CD8-positive, alpha-beta T cell (primary cell): ENCODE measurements at regions of chr22 and their contacts with region 1.

Region 1: GRCh38 chr22:26483439-26484359 is at the starts of genes HPS4 and SRRD:
- DNase-seq: peak; percentile 87 to 97 (median 93)
- ATAC-seq: peak; percentile 83
- H3K4me3 ChIP-seq: peak within 1 kb of the TSS; percentile 78 to 97
- H3K4me3 Mint-ChIP-seq: peak within 1 kb of the TSS; percentile 95
- H3K27ac ChIP-seq: peak within 1 kb of the TSS; percentile 85 to 94
- H3K27ac Mint-ChIP-seq: peak within 1 kb of the TSS; percentile 99
- H3K4me1 ChIP-seq: peaks cover 53% of the 10 kb centered on the region
- H3K4me1 Mint-ChIP-seq: peaks cover 69% of the 10 kb centered on the region
- H3K27me3 ChIP-seq: no peaks in the 10 kb centered on the region
- H3K27me3 Mint-ChIP-seq: no peaks in the 10 kb centered on the region
- CTCF ChIP-seq: no peak
- total RNA-seq, gene HPS4: 67.0 to 71.0 TPM
- total RNA-seq, gene SRRD: 22.1 to 24.1 TPM

Region 2: DNA sequence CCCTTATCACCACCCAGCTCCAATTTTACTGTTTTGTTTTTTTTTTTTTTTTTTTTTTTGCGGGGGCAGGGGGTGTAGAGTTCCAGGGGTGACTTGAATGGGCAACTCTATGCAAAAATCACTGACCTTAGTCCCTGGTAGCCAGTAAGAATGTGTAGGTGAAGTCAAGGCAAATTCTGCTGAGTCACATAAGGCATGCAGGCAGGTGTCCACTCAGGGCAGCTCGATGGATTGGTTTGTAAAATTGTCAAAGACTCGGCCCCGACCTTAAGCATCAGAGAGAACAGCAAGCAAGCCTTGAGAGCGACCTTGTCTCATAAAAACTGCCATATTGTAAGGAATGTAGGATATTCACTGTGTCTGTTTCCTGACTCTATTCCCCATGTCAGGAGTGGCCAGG is 465.8 kb before region 1 on chr22:
- CTCF ChIA-PET with region 1: no interaction called
- POLR2A ChIA-PET with region 1: no interaction called
- intact Hi-C with region 1: no loop called
- DNase-seq: no peak
- ATAC-seq: no peak
- H3K4me3 ChIP-seq: no peak overlapping the region
- H3K4me3 Mint-ChIP-seq: no peak overlapping the region
- H3K27ac ChIP-seq: no peak overlapping the region
- H3K27ac Mint-ChIP-seq: no peak overlapping the region
- H3K4me1 ChIP-seq: no peaks in the 10 kb centered on the region
- H3K4me1 Mint-ChIP-seq: no peaks in the 10 kb centered on the region
- H3K27me3 ChIP-seq: no peaks in the 10 kb centered on the region
- H3K27me3 Mint-ChIP-seq: peaks cover 16% of the 10 kb centered on the region
- CTCF ChIP-seq: no peak

Region 3: DNA sequence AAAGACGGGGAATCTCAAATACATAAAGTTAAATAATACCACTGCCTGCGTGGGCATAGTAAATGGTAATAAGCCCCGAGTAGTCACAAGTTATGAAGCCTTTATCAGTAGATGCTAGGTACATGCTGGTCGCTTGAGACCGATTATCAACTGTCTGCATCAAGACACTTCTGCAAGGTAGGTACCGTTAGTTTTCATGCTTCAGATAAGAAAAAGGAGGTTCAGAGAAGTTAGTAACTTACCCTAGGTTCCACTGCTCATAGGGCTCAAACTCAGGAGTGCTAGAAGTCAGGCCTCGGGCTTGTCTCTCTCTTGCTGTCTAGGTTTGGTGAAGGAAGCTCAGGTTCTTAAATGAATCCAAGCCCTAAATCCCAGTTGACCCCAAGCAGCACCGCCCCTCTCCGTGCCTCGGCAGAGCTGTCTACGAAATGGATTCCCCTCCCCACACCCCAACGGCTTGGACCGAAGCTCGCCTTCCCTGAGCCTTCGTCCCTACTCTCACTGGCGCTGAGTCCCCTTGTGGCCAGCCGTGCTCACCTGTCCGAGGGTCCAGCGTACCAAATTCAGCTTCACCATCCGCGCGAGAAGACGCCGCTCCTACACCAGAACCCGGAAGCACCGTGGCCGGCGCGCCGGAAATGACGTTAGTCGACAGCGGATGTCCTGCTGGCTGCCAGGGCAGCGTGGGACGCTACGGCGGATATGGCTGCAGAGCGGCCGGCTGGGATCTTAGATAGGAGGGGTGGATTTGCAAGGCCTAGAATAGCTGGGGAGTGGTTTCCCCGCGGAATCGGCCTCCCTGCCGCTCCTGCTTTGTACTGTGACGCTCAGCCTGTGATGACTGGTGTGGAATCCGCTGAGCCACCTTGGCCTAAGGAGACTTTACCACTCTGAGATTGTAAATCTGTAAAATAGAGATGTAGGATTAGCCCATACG is 28.4 kb after region 1 on chr22 and contains the start of gene TFIP11:
- CTCF ChIA-PET with region 1: interaction called, 3 read pairs
- POLR2A ChIA-PET with region 1: interaction called, 17 read pairs
- intact Hi-C with region 1: loop called (anchors 1 kb)
- DNase-seq: peak; percentile 76 to 94 (median 92)
- ATAC-seq: peak; percentile 86
- H3K4me3 ChIP-seq: peak within 1 kb of the TSS; percentile 78 to 90
- H3K4me3 Mint-ChIP-seq: peak within 1 kb of the TSS; percentile 96
- H3K27ac ChIP-seq: peak within 1 kb of the TSS; percentile 81 to 85
- H3K27ac Mint-ChIP-seq: peak within 1 kb of the TSS; percentile 99
- H3K4me1 ChIP-seq: peaks cover 25% of the 10 kb centered on the region
- H3K4me1 Mint-ChIP-seq: peaks cover 44% of the 10 kb centered on the region
- H3K27me3 ChIP-seq: no peaks in the 10 kb centered on the region
- H3K27me3 Mint-ChIP-seq: no peaks in the 10 kb centered on the region
- CTCF ChIP-seq: no peak
- total RNA-seq, gene TFIP11: 138 to 142 TPM